GM18951 (cell line): ENCODE measurements at regions of chr5 and their contacts with region 1.

Region 1: DNA sequence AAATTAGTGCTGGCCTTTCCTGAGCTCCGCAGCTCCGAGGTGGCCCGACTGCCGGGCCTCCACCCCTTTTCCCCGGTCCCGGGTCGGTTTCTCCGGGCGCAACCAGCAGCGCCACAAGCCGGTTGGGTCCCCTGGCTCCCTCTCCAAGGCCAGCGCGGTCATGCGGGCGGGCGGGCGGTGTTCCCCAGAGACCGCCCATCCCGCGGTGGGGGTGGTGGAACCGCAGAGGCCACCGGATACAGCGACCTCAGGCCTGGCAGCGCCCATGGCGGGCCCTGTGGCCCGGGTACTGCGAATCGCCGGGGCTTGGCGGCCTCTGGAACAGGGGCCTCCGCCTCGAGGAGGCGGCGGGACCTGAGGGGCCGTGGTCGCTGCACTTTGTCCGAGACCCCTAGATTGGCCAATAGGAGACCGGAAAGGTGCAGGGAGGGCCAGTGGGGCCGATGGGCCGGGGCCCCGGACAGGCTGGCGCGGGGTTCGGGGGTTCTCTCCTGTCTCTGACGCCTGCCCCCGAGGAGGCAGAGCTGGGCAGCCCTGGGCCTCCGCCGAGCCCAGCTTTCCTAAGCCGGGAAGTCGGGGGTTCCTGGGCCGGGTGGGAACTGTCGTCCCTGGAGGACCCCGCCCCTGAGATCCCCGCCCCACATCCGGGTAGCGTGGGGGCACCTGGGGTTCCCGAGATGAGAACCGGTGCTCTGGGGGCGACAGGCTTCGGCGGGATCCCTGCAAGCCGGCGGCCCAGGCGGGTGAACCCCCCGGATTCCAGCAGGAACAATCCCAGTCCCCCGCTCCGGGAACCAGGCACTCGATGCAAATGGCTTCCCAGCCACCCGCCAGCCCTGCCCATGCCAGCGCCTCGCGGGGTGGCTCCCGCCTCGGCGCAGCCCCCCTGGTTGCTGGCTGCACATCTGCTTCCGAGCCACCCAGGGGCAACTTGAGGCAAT is 293.9 kb downstream of the ZSWIM6 start:
- POLR2A ChIP-seq: no peak

Region 2: DNA sequence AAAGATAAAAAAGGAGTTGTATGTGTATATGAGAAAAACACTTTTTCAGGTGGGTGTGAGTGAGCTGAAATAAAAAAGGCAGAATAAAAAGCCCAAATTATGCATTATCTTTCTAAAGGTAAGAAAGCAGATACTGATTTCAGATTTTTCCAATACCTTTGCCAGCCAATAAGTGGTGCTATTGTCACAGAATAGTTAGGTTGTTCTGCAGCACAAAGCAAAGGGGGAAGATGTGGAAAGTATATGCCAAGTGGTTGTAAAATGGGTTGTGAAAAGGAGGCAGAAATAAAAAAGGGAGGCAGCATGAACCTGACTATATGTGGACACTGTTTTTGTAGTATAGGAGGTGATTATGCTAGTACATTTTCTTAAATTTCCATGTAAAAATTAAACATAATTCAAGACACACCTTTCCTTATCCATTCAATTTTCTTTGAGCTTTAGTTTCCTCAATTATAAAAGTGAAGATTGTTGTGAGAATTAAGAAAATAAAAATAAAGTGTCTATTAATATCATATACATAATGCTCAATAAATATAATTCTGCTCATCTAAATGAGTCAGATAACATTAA is 570.4 kb before region 1 on chr5:
- in situ Hi-C with region 1: loop called (anchors 25 kb)
- POLR2A ChIP-seq: no peak